Activated CD4-positive, alpha-beta T cell treated with anti-CD3 and anti-CD28 coated beads, Interleukin-2, amount 10 ng/mL, durations not matched to agents 24 days and 14 days (primary cell): ENCODE measurements at regions of chr6 and their contacts with region 1.

Region 1: DNA sequence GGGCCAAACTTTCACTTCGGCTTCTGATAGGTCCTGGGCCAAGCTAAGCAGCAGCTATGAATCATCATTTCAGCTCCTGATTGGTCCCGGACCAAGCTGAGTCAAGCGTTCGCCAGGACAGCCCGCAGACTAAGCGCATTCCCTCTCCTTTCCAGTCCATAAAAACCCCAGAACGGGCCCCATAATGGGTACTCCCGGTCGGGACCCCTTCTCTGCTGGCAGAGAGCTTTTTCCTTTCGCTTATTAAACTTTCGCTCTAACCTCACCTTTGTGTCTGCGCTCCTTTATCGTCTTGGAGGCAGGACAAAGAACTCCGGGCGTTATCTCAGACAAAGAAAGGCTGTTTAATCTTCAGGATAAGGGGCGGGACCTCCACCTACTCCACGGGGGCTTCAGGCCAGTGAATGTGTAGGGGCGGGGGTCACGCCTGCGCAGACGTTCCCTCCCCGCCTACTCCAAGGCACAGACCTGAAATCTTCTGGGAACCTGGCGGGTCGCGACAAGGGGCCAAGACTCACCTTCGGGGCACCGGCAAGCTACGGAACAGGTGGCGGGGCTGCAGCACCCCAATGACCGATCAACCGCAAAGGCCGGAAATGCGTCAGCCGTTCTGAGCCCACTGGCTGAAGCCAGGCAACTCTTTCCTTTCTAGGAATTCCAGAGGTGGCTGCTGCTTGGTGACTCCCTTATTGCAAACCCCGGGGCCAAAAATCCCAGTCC is at the start of gene ZSCAN31:
- DNase-seq: peak; percentile 89
- H3K4me3 Mint-ChIP-seq: no peak within 1 kb of the TSS
- H3K27ac Mint-ChIP-seq: no peak within 1 kb of the TSS
- H3K4me1 Mint-ChIP-seq: peaks cover 3% of the 10 kb centered on the region
- H3K27me3 Mint-ChIP-seq: peaks cover 4% of the 10 kb centered on the region
- total RNA-seq, gene ZSCAN31: 0.54 and 0.79 TPM in 2 replicates

Region 2: GRCh38 chr6:28224131-28225055 is 111.3 kb before region 1 on chr6:
- intact Hi-C with region 1: loop called (anchors 5 kb)
- DNase-seq: no peak
- H3K4me3 Mint-ChIP-seq: peak overlapping the region; percentile 89
- H3K27ac Mint-ChIP-seq: peak overlapping the region; percentile 62
- H3K4me1 Mint-ChIP-seq: peaks cover 26% of the 10 kb centered on the region
- H3K27me3 Mint-ChIP-seq: peaks cover 44% of the 10 kb centered on the region

Region 3: DNA sequence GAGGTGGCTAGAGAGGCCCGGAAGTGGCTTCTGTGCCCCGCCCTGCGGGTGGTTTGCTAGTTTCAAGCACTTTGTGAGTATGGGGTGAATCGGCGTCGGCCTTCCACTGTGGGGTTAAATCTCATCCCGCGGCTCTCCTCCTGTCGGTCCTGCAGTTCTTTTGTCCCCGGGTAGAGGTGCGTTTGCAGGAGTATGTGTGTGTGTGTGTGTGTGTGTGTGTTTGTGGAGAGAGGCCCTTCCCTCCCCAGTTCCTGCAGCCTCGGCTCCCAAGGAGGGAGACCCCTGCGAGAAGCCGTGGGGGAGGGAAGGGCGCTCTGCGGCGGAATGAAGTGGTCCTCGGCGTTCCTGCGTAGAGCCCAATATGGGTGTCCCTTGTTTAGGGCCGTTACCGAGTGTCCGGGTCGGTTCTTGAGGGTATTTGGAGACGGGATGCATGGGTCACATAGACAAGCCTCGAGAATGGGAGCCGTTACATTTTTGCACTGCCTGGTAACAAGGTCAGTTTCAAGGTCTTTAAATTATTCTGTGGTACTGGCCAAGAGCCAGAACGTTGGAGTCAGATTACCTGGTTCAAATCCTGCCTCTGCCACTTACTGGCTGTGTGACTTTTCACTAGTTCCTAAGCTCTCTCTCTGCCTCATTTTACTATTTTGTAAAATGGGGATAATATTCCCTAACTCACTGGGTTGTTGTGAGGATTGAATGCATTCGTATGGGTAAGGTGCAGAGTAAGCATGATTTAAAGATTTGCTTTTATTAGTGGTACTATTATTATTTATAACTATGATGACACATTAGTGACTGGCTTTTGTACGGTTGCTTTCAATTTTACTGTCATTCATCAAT is 14.4 kb after region 1 on chr6 and contains the start of gene ZKSCAN3:
- intact Hi-C with region 1: loop called (anchors 1 kb)
- DNase-seq: peak; percentile 96
- H3K4me3 Mint-ChIP-seq: peak within 1 kb of the TSS; percentile 98
- H3K27ac Mint-ChIP-seq: peak within 1 kb of the TSS; percentile 91
- H3K4me1 Mint-ChIP-seq: peaks cover 22% of the 10 kb centered on the region
- H3K27me3 Mint-ChIP-seq: peaks cover 22% of the 10 kb centered on the region
- total RNA-seq, gene ZKSCAN3: 2.7 and 2.9 TPM in 2 replicates